ENCODE measurements at regions of chr2 and their contacts with region 1.

Region 1: GRCh38 chr2:64865073-64865830 is 123.9 kb upstream of the SLC1A4 start:
- DNase-seq: peak; percentile 45
- H3K4me3 ChIP-seq: peak overlapping the region; percentile 41 to 50 (median 48)
- H3K27ac ChIP-seq: peak overlapping the region; percentile 45
- H3K4me1 ChIP-seq: peaks cover 22% of the 10 kb centered on the region
- H3K27me3 ChIP-seq: no peaks in the 10 kb centered on the region
- CTCF ChIP-seq: peak; percentile 37 to 50

Region 2: GRCh38 chr2:64586883-64587481 is 278.3 kb before region 1 on chr2:
- CTCF ChIA-PET with region 1: no interaction called
- dilution Hi-C with region 1: no loop called
- in situ Hi-C with region 1: loop called in 1 of 2 experiments (anchors 10 kb)
- intact Hi-C with region 1: loop called (anchors 1 kb)
- DNase-seq: peak; percentile 47
- H3K4me3 ChIP-seq: no peak overlapping the region
- H3K27ac ChIP-seq: no peak overlapping the region
- H3K4me1 ChIP-seq: no peaks in the 10 kb centered on the region
- H3K27me3 ChIP-seq: no peaks in the 10 kb centered on the region
- CTCF ChIP-seq: peak; percentile 59 to 67

Region 3: DNA sequence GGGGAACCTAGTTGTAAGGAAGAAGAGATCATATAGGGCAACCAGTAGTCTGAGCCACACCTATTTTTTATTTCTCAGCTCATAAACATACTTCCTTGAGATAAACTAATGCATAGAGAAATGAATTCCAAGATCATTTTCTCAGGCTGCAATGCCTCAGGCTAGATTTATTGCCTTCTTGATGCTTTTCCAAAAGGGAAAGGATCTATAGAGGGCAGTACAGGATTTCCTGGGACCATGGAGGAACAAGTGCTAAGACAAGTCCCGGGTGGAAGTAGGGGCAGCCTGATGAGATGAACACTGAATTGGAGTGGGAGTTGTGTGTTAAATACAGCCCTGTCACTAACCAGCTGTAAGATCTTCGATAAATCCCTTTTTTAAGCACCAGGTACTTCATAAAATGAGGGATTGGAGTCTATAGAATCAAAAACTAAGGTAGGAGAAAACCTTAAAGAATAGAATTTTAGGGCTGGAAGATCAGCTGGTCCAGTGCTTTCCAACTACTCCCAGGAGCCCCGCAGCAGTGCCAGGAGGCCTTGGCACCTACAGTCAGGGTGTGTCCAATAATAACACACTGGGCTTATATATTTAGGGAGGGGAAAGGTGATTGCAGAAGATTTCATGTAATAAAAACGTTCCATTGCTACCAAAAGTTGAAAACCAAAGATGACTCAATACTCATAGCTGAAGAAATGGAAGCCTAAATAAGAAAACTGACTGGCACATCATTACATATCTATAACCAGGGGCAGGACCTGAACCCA is 269.7 kb before region 1 on chr2:
- CTCF ChIA-PET with region 1: no interaction called
- dilution Hi-C with region 1: no loop called
- in situ Hi-C with region 1: loop called (anchors 5 to 10 kb)
- intact Hi-C with region 1: no loop called
- DNase-seq: no peak
- H3K4me3 ChIP-seq: no peak overlapping the region
- H3K27ac ChIP-seq: no peak overlapping the region
- H3K4me1 ChIP-seq: peaks cover 13% of the 10 kb centered on the region
- H3K27me3 ChIP-seq: no peaks in the 10 kb centered on the region
- CTCF ChIP-seq: peak; percentile 19 to 40

Region 4: GRCh38 chr2:64635976-64636911 is 229.0 kb before region 1 on chr2:
- CTCF ChIA-PET with region 1: no interaction called
- dilution Hi-C with region 1: no loop called
- in situ Hi-C with region 1: loop called in 1 of 2 experiments (anchors 10 kb)
- intact Hi-C with region 1: no loop called
- DNase-seq: no peak
- H3K4me3 ChIP-seq: no peak overlapping the region
- H3K27ac ChIP-seq: no peak overlapping the region
- H3K4me1 ChIP-seq: peaks cover 49% of the 10 kb centered on the region
- H3K27me3 ChIP-seq: no peaks in the 10 kb centered on the region
- CTCF ChIP-seq: no peak

Region 5: DNA sequence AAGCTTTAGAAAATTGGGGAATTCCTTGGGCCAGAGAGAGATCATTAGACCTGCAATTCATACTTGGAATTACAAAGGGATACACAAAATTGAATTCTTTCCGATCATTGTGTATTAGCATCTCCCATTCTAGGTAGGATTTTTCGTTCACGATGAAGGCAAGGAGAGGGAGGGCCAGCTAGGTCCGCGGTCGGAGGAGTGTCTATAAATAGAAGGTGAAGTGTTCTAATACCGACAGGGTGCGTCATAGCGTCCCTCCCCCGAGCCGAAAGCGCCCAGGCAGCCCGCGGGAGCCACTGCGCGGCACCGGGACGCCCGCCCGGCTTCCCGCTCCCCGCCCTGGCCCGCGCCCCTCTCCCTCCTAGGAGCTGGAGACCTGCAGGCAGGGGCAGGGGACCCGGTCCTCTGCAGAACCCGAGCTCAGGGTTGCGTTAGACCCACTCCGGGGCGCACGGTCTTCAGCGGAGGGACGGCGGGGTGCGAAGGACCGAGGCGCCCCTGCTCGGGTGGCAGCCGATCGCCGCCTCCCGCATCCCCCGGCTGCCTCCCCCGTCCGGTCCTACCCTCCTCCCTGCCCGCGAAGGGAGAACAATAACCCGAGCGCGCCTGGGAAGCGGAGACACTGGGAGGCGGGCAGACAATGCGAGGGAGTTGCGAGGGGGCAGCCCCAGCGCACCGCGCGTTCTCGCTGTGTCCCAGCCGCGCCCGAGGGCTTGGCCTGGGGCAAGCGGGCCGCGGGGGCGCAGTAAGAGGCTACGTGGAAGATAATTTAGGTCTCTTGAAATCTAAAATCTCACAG is 97.4 kb before region 1 on chr2:
- CTCF ChIA-PET with region 1: interaction called, 40 read pairs
- dilution Hi-C with region 1: no loop called
- in situ Hi-C with region 1: no loop called
- intact Hi-C with region 1: loop called (anchors 1 kb)
- DNase-seq: peak; percentile 86
- H3K4me3 ChIP-seq: peak overlapping the region; percentile 57 to 75 (median 67)
- H3K27ac ChIP-seq: peak overlapping the region; percentile 86
- H3K4me1 ChIP-seq: peaks cover 28% of the 10 kb centered on the region
- H3K27me3 ChIP-seq: no peaks in the 10 kb centered on the region
- CTCF ChIP-seq: peak in 1 of 2 donors; percentile 0

Measured in mammary epithelial cell (primary cell).